ENCODE measurements at regions of chr10 and their contacts with region 1.

Region 1: GRCh38 chr10:93437088-93437945 is 44.8 kb downstream of the MYOF start:
- DNase-seq: peak; percentile 72 to 96
- H3K4me3 ChIP-seq: peak overlapping the region; percentile 29 to 46
- H3K27ac ChIP-seq: peak overlapping the region; percentile 96 to 98
- H3K4me1 ChIP-seq: peaks cover 34 to 85% of the 10 kb centered on the region in 2 donors
- H3K27me3 ChIP-seq: no peaks in the 10 kb centered on the region
- CTCF ChIP-seq: no peak

Region 2: DNA sequence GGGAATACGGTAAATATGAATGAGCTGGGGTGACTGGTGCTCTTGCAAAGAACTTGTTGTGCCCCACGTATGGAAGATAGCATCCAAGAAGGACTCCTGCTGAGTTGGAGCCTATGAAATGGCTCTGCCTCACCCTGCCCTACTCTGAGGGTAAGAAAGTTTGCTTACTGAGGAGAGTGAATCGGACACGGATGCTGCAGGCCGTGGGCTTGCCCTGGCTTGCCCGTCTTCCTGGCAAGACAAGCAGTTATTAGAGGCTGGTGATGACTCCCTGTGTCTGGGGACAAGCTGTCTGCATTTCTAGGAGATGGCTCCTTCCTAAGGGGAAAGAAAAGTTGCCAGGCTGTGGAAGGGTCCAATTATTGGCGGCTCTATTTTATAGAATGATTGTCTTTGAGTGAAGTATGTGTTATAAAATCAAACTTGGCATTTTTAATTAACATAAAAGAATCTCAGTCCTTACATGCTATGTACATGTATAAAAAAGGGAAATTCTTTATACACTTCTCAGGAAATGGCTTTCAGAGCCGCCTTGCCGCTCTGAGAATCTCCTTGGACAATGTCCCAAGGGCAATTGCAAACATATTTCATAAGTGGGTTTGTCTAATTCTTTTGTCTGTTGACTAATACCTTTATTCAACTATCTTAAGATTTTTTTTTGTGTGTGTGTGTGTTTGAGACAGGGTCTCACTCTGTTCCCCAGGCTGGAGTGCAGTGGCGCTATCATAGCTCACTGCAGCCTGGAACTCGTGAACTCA is 299.0 kb before region 1 on chr10:
- intact Hi-C with region 1: no loop called
- DNase-seq: no peak
- H3K4me3 ChIP-seq: no peak overlapping the region
- H3K27ac ChIP-seq: no peak overlapping the region
- H3K4me1 ChIP-seq: no peaks in the 10 kb centered on the region
- H3K27me3 ChIP-seq: no peaks in the 10 kb centered on the region
- CTCF ChIP-seq: no peak

Region 3: DNA sequence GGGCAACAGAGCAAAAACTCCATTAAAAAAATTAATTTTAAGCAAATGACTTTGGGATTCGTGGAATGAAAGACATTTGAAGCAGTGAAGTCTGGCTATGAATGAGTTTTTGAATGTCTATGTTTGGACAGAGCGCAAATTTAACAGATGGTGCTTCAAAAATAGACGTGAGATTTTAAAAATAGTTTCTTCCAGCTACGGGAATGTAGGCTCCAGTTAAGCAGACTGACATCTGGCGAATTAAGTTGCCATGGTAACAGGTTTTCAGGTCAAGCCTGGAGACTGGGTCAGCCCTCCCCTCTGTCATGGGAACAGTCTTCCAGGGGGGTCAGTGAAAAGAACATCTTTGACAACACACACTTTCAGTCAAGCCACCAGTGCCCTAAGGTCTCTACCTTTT is 17.2 kb before region 1 on chr10:
- intact Hi-C with region 1: loop called (anchors 2 kb)
- DNase-seq: no peak
- H3K4me3 ChIP-seq: no peak overlapping the region
- H3K27ac ChIP-seq: peak overlapping the region; percentile 72 to 82
- H3K4me1 ChIP-seq: peaks cover 18 to 33% of the 10 kb centered on the region in 2 donors
- H3K27me3 ChIP-seq: no peaks in the 10 kb centered on the region
- CTCF ChIP-seq: no peak

Region 4: GRCh38 chr10:93471110-93471651 is 33.9 kb after region 1 on chr10:
- intact Hi-C with region 1: loop called (anchors 1 kb)
- DNase-seq: peak in 1 of 2 donors; percentile 72
- H3K4me3 ChIP-seq: no peak overlapping the region
- H3K27ac ChIP-seq: peak overlapping the region; percentile 83 to 85
- H3K4me1 ChIP-seq: peaks cover 19 to 64% of the 10 kb centered on the region in 2 donors
- H3K27me3 ChIP-seq: no peaks in the 10 kb centered on the region
- CTCF ChIP-seq: no peak

Region 5: GRCh38 chr10:93482145-93482834 is 45.0 kb after region 1 on chr10 and contains the start of gene MYOF:
- intact Hi-C with region 1: loop called (anchors 2 kb)
- DNase-seq: peak in 1 of 2 donors; percentile 83
- H3K4me3 ChIP-seq: peak within 1 kb of the TSS; percentile 62 to 69
- H3K27ac ChIP-seq: peak within 1 kb of the TSS; percentile 83 to 88
- H3K4me1 ChIP-seq: peaks cover 2 to 25% of the 10 kb centered on the region in 2 donors
- H3K27me3 ChIP-seq: no peaks in the 10 kb centered on the region
- CTCF ChIP-seq: peak; percentile 37 to 64 (median 61)
- total RNA-seq, gene MYOF: 68.2 TPM

Region 6: GRCh38 chr10:93604146-93604545 is 166.8 kb after region 1 on chr10:
- intact Hi-C with region 1: no loop called
- DNase-seq: no peak
- H3K4me3 ChIP-seq: no peak overlapping the region
- H3K27ac ChIP-seq: no peak overlapping the region
- H3K4me1 ChIP-seq: peaks cover 0 to 9% of the 10 kb centered on the region in 2 donors
- H3K27me3 ChIP-seq: no peaks in the 10 kb centered on the region
- CTCF ChIP-seq: no peak